ENCODE measurements at regions of chr7 and their contacts with region 1.

Region 1: GRCh38 chr7:102236592-102237287 is 49.9 kb upstream of the SH2B2 start:
- DNase-seq: peak; percentile 69
- ATAC-seq: peak; percentile 54
- H3K4me3 ChIP-seq: no peak overlapping the region
- H3K4me3 Mint-ChIP-seq: no peak overlapping the region
- H3K27ac ChIP-seq: no peak overlapping the region
- H3K27ac Mint-ChIP-seq: no peak overlapping the region
- H3K4me1 ChIP-seq: no peaks in the 10 kb centered on the region
- H3K4me1 Mint-ChIP-seq: no peaks in the 10 kb centered on the region
- H3K27me3 ChIP-seq: no peaks in the 10 kb centered on the region
- H3K27me3 Mint-ChIP-seq: no peaks in the 10 kb centered on the region
- CTCF ChIP-seq: peak; percentile 83

Region 2: DNA sequence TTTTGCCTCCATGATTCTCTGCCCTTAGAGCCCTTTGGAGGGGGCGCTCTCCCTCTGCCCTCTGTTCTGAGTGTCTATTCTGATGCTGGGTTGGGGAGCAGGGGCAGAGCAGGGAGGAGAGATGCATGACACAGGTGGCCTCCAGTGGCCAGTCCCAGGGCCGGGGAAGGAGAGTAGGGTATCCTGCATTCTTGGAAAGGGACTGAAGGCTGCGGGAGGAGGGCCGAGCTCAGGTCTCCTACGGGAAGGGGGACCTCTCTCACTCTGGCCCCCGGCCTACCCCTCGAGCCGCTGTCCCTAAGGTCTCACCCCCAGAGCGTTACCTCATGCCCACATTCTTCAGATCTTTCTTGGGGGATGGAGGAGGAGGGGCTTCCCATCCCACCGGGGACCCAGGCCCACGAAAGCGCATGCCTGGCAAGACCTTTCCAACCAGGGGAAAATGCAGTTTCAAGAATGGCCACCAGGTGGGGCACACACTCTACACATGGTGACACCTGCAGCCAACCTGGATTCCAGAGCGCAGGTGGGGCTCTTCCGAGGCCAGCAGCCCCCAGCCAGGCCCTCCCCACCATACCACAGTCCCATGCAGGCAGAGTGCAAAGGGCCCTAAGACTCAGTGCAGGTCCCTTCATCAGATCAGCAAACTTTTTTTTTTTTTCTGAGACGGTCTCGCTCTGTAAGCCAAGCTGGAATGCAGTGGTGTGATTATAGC is 694.1 kb before region 1 on chr7:
- CTCF ChIA-PET with region 1: interaction called, 20 read pairs
- POLR2A ChIA-PET with region 1: interaction called, 3 read pairs
- intact Hi-C with region 1: loop called (anchors 1 kb)
- DNase-seq: peak; percentile 77
- ATAC-seq: peak; percentile 68
- H3K4me3 ChIP-seq: no peak overlapping the region
- H3K4me3 Mint-ChIP-seq: no peak overlapping the region
- H3K27ac ChIP-seq: no peak overlapping the region
- H3K27ac Mint-ChIP-seq: no peak overlapping the region
- H3K4me1 ChIP-seq: no peaks in the 10 kb centered on the region
- H3K4me1 Mint-ChIP-seq: no peaks in the 10 kb centered on the region
- H3K27me3 ChIP-seq: peaks cover 0 to 10% (median 1%) of the 10 kb centered on the region in 4 experiments
- H3K27me3 Mint-ChIP-seq: peaks cover 5% of the 10 kb centered on the region
- CTCF ChIP-seq: peak; percentile 88

Region 3: DNA sequence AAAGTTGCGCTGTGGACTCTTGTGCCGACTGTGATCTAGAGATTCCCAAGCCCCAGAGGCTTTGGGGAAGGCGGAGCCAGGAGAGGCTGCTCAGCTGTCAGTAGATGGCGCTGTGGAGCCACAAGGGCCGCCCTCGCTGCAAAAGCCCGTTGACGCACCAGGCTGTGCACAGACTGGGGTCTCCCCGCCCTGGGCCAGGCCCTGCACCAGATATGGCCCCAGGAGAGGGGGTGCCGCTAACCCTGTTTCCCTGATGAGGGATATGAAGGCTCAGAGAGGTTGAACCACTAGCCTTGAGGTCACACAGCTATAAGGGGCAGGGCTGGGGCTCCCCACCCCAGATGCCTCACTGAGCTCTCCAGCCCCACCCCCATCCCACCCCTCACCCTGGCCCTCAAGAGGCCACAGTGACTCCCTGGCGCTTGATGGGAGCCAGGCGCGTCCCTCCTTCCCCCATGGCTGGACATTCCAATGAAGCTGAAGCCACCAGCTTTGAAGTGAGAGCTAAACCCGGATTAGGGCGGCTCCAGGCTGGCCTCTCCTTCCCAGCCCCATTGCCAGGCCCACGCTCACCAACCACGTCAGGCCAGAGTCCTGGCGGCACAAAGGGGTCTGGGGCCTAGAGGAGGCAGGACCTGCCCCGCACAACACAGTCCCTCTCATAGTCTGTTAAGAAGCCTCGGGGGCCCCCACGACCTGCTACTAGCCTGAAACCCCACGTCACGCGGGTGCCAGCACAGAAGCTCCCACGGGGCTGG is 634.1 kb before region 1 on chr7:
- CTCF ChIA-PET with region 1: interaction called, 39 read pairs
- POLR2A ChIA-PET with region 1: no interaction called
- intact Hi-C with region 1: no loop called
- DNase-seq: peak; percentile 73
- ATAC-seq: peak; percentile 81
- H3K4me3 ChIP-seq: no peak overlapping the region
- H3K4me3 Mint-ChIP-seq: no peak overlapping the region
- H3K27ac ChIP-seq: no peak overlapping the region
- H3K27ac Mint-ChIP-seq: no peak overlapping the region
- H3K4me1 ChIP-seq: peaks cover 0 to 5% of the 10 kb centered on the region in 2 donors
- H3K4me1 Mint-ChIP-seq: no peaks in the 10 kb centered on the region
- H3K27me3 ChIP-seq: peaks cover 0 to 4% (median 0%) of the 10 kb centered on the region in 4 experiments
- H3K27me3 Mint-ChIP-seq: no peaks in the 10 kb centered on the region
- CTCF ChIP-seq: peak; percentile 89

Region 4: GRCh38 chr7:101688183-101688831 is 548.4 kb before region 1 on chr7:
- CTCF ChIA-PET with region 1: interaction called, 17 read pairs
- POLR2A ChIA-PET with region 1: no interaction called
- intact Hi-C with region 1: loop called (anchors 1 kb)
- DNase-seq: peak; percentile 87
- ATAC-seq: peak; percentile 91
- H3K4me3 ChIP-seq: peak overlapping the region in 1 of 5 experiments; percentile 15
- H3K4me3 Mint-ChIP-seq: no peak overlapping the region
- H3K27ac ChIP-seq: no peak overlapping the region
- H3K27ac Mint-ChIP-seq: no peak overlapping the region
- H3K4me1 ChIP-seq: peaks cover 3 to 7% of the 10 kb centered on the region in 2 donors
- H3K4me1 Mint-ChIP-seq: peaks cover 2% of the 10 kb centered on the region
- H3K27me3 ChIP-seq: peaks cover 0 to 12% (median 1%) of the 10 kb centered on the region in 4 experiments
- H3K27me3 Mint-ChIP-seq: peaks cover 5% of the 10 kb centered on the region
- CTCF ChIP-seq: peak; percentile 93

Region 5: DNA sequence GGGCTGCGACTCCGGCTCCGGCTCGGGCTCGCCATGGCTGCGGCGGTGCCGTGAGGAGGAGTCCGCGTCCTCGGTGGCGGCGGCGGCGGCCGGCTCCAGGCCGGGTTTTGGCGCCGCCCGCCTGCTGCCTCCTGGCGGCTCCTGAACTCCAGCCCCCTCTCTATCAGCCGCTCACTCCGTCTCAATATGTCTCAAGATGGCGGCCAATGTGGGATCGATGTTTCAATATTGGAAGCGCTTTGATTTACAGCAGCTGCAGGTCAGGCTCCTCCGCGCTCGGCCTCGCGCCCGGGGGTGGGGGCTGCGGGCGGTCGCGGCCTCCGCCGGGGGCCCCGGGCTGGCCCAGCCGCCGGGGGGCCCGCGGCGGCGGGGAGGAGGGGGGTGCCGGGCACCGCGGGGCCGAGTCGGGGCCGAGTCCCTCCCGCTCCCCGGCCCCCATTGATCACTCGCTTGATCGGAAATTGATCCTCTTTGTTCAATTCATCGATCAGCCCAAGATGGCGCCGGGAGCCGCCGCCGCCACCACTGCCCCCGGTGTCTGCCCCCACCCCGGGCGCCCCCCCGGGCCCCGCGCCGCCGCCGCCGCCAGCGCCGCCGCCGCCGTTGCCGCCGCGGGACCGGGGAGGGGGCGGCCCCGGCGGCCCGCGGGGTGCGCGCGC is 420.8 kb before region 1 on chr7:
- CTCF ChIA-PET with region 1: interaction called, 9 read pairs
- POLR2A ChIA-PET with region 1: no interaction called
- intact Hi-C with region 1: loop called (anchors 5 kb)
- DNase-seq: peak; percentile 87
- ATAC-seq: peak; percentile 73
- H3K4me3 ChIP-seq: peak overlapping the region; percentile 49 to 73 (median 61)
- H3K4me3 Mint-ChIP-seq: peak overlapping the region; percentile 88
- H3K27ac ChIP-seq: peak overlapping the region in 1 of 2 donors; percentile 18
- H3K27ac Mint-ChIP-seq: peak overlapping the region; percentile 89
- H3K4me1 ChIP-seq: peaks cover 7 to 16% of the 10 kb centered on the region in 2 donors
- H3K4me1 Mint-ChIP-seq: peaks cover 28% of the 10 kb centered on the region
- H3K27me3 ChIP-seq: no peaks in the 10 kb centered on the region
- H3K27me3 Mint-ChIP-seq: no peaks in the 10 kb centered on the region
- CTCF ChIP-seq: no peak

Region 6: DNA sequence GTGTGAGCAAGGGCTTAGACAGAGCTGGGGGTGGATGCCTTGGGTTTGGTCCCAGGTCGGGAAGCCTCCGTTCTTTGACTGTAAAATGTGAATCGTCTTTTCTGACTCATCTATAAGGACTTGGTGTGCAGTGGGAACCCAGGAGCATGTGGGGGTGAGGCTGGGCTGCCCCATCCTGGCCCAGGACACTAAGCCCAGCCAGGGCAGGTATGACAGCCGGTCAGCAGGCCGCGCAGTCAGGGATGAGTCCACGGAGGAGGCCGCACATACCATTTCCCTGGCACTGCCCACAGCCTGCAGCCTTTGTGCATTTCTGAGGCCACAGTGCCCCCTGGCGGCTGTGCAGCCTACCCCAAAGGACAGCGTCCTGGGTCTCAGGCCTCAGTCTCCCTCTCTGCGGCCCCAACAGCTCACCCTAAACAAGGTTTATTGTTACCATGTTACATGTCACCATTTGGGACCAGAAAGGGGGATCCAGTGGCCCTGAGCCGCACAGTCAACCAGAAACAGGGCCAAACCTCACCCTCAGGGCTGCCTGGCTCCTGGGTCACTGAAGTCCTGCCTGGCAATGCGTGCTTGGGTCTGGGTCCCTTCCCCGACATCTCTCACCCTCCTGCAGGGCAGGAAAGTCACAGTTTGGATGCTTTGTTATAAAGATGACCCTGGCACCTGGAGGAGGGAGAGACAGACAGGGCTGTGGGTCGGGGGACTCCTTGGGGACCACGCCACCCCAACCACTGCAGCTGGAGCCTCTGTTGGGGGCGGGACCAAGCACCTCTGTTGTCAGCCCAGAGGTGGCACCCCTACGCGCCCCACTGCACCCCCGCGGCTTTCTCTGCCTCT is 35.6 kb after region 1 on chr7:
- CTCF ChIA-PET with region 1: interaction called, 3 read pairs
- POLR2A ChIA-PET with region 1: no interaction called
- intact Hi-C with region 1: loop called (anchors 1 kb)
- DNase-seq: peak; percentile 79
- ATAC-seq: peak; percentile 87
- H3K4me3 ChIP-seq: no peak overlapping the region
- H3K4me3 Mint-ChIP-seq: no peak overlapping the region
- H3K27ac ChIP-seq: no peak overlapping the region
- H3K27ac Mint-ChIP-seq: no peak overlapping the region
- H3K4me1 ChIP-seq: peaks cover 0 to 3% of the 10 kb centered on the region in 2 donors
- H3K4me1 Mint-ChIP-seq: peaks cover 2% of the 10 kb centered on the region
- H3K27me3 ChIP-seq: no peaks in the 10 kb centered on the region
- H3K27me3 Mint-ChIP-seq: no peaks in the 10 kb centered on the region
- CTCF ChIP-seq: peak; percentile 95

Measured in B cell (primary cell).